ENCODE measurements at regions of chr5 and their contacts with region 1.

Region 1: DNA sequence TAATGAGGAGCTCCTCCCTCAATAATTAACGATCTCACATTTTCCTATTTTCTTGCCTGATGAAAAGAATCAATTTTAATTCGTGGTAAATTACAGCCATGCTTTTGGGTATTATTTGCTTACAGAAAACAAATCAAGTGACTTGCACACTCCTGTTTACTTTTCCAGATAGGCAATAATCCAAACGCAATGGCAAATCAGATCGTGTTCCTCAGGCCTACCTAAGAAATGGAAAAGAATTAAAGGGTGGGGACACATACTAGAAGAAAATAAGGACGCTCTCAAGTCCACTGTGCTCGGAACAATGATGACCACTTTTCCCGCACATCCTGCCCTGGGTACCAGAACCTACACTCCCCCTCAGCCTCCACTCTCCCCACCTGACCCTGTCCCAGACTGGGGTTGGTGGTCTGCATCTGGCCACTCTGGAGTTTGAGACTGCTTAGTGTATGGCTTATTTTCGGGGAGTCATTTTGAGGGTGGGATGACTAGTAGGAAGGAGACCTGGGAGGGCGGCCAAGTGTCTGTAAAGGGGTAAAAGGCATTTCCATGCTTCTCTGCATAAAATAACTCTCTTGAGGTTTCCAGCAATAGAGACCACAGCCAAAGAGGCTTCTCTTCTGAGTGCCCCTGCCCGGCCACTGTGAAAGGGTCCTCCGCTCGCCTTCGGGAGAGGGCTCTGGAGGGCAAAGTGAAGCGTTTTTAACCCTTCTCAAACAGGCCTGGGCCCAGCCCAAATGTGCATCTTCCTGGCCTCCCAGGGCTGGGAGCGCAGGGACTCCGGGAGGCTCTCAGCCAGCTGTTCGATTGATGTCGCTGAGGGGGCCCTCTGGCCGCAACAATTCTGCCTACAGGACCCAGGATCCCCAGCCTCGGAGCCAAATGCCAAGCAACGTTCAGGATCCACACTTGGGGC is 4.5 kb upstream of the OTP start:
- DNase-seq: peak; percentile 51
- H3K4me3 ChIP-seq: no peak overlapping the region
- H3K27ac ChIP-seq: no peak overlapping the region
- H3K4me1 ChIP-seq: peaks cover 0 to 4% of the 10 kb centered on the region in 2 experiments; a peak in 1 of 4 replicates
- H3K27me3 ChIP-seq: peaks cover 95% of the 10 kb centered on the region
- CTCF ChIP-seq: no peak
- EP300 ChIP-seq: no peak
- RAD21 ChIP-seq: no peak

Region 2: GRCh38 chr5:77630258-77631089 is 12.5 kb before region 1 on chr5:
- CTCF ChIA-PET with region 1: interaction called, 11 read pairs
- POLR2A ChIA-PET with region 1: no interaction called
- DNase-seq: peak; percentile 82
- H3K4me3 ChIP-seq: peak overlapping the region; percentile 34 to 43; a peak in 3 of 4 replicates
- H3K27ac ChIP-seq: no peak overlapping the region
- H3K4me1 ChIP-seq: peaks cover 0 to 14% of the 10 kb centered on the region in 2 experiments; a peak in 1 of 4 replicates
- H3K27me3 ChIP-seq: peaks cover 79% of the 10 kb centered on the region
- CTCF ChIP-seq: peak; percentile 18; the same call in 1 of the 2 replicates
- EP300 ChIP-seq: no peak
- RAD21 ChIP-seq: no peak

Measured in SK-N-SH (cell line).